CD4-positive, alpha-beta memory T cell (primary cell): ENCODE measurements at regions of chr1 and their contacts with region 1.

Region 1: DNA sequence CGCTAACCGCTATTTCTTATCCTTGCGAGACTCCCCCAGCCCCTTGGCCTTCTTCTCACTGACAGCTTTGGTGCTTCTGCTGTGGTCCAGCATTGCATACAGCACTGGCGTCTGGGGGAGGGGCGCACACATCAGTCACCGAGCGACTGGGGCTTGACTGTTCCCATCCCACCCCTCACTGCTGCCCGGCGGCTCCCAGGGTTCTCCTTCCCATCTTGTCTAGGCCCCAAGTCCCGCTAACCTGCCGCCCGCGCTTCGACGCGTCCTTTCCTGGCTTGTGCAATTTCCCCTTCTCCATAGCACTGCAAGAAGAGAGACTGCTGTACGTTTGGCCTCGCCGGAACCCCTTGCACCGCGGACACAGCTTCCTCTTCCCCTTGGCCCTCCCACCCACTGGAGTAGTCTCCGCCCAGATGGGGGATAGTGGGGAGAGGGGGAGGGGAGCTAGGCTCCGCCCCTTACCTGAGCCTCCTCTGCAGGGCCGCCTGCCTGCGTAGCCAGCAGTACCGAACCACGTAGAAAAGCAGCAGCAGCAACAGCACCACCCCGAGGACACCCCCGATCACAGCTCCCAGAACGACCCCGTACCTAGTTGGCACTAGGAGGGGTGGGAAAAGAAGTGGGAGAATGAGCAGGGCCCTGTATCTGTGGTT is 3.8 kb downstream of the MPZ start:
- DNase-seq: peak; percentile 89 to 92 (median 90)
- H3K4me3 ChIP-seq: peak overlapping the region; percentile 48 to 86
- H3K4me3 Mint-ChIP-seq: peak overlapping the region; percentile 89 to 100 (median 97)
- H3K27ac ChIP-seq: peak overlapping the region; percentile 77
- H3K27ac Mint-ChIP-seq: peak overlapping the region; percentile 91 to 99 (median 96)
- H3K4me1 ChIP-seq: peaks cover 29% of the 10 kb centered on the region
- H3K4me1 Mint-ChIP-seq: peaks cover 17 to 41% (median 29%) of the 10 kb centered on the region in 4 donors
- H3K27me3 ChIP-seq: no peaks in the 10 kb centered on the region
- H3K27me3 Mint-ChIP-seq: no peaks in the 10 kb centered on the region

Region 2: GRCh38 chr1:161185282-161185682 is 120.7 kb before region 1 on chr1:
- CTCF ChIA-PET with region 1: interaction called, 11 read pairs
- POLR2A ChIA-PET with region 1: interaction called, 8 read pairs
- intact Hi-C with region 1: no loop called
- DNase-seq: peak; percentile 86 to 92 (median 88)
- H3K4me3 ChIP-seq: peak overlapping the region; percentile 8 to 25
- H3K4me3 Mint-ChIP-seq: peak overlapping the region; percentile 73 to 89 (median 83)
- H3K27ac ChIP-seq: peak overlapping the region; percentile 47
- H3K27ac Mint-ChIP-seq: peak overlapping the region; percentile 86 to 96 (median 92)
- H3K4me1 ChIP-seq: peaks cover 94% of the 10 kb centered on the region
- H3K4me1 Mint-ChIP-seq: peaks cover 57 to 88% (median 78%) of the 10 kb centered on the region in 4 donors
- H3K27me3 ChIP-seq: no peaks in the 10 kb centered on the region
- H3K27me3 Mint-ChIP-seq: no peaks in the 10 kb centered on the region

Region 3: DNA sequence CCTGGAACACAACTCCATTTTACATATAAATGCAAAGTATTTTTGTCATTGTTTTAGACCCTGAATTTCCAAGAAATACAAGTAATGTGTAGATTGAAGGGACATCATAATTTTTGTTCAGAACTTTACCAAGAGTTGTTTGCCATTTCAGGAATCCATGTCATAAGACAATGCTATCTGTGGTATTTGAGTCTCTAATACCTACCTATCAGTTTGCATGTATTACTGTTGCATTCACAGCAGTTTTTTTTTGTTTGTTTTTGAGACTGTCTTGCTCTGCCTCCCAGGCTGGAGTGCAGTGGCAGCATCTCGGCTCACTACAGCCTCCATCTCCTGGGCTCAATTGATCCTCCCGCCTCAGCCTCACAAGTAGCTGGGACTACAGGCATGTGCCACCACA is 13.4 kb before region 1 on chr1:
- CTCF ChIA-PET with region 1: interaction called, 25 read pairs
- POLR2A ChIA-PET with region 1: interaction called, 4 read pairs
- intact Hi-C with region 1: no loop called
- DNase-seq: no peak
- H3K4me3 ChIP-seq: no peak overlapping the region
- H3K4me3 Mint-ChIP-seq: no peak overlapping the region
- H3K27ac ChIP-seq: no peak overlapping the region
- H3K27ac Mint-ChIP-seq: no peak overlapping the region
- H3K4me1 ChIP-seq: no peaks in the 10 kb centered on the region
- H3K4me1 Mint-ChIP-seq: peaks cover 0 to 5% (median under 1%) of the 10 kb centered on the region in 4 donors
- H3K27me3 ChIP-seq: no peaks in the 10 kb centered on the region
- H3K27me3 Mint-ChIP-seq: no peaks in the 10 kb centered on the region

Region 4: GRCh38 chr1:161382214-161383019 is 76.4 kb after region 1 on chr1:
- CTCF ChIA-PET with region 1: interaction called, 16 read pairs
- POLR2A ChIA-PET with region 1: no interaction called
- intact Hi-C with region 1: no loop called
- DNase-seq: peak in 4 of 5 donors; percentile 48 to 61 (median 56)
- H3K4me3 ChIP-seq: no peak overlapping the region
- H3K4me3 Mint-ChIP-seq: no peak overlapping the region
- H3K27ac ChIP-seq: no peak overlapping the region
- H3K27ac Mint-ChIP-seq: peak overlapping the region in 3 of 7 donors; percentile 3 to 76 (median 7)
- H3K4me1 ChIP-seq: peaks cover 17% of the 10 kb centered on the region
- H3K4me1 Mint-ChIP-seq: peaks cover 7 to 14% (median 13%) of the 10 kb centered on the region in 4 donors
- H3K27me3 ChIP-seq: no peaks in the 10 kb centered on the region
- H3K27me3 Mint-ChIP-seq: no peaks in the 10 kb centered on the region

Region 5: GRCh38 chr1:161389691-161390558 is 83.9 kb after region 1 on chr1:
- CTCF ChIA-PET with region 1: no interaction called
- POLR2A ChIA-PET with region 1: interaction called, 6 read pairs
- intact Hi-C with region 1: loop called (anchors 2 kb)
- DNase-seq: peak; percentile 91 to 96 (median 92)
- H3K4me3 ChIP-seq: peak overlapping the region; percentile 79 to 86
- H3K4me3 Mint-ChIP-seq: peak overlapping the region; percentile 84 to 95 (median 94)
- H3K27ac ChIP-seq: peak overlapping the region; percentile 87
- H3K27ac Mint-ChIP-seq: peak overlapping the region; percentile 94 to 99 (median 97)
- H3K4me1 ChIP-seq: peaks cover 29% of the 10 kb centered on the region
- H3K4me1 Mint-ChIP-seq: peaks cover 12 to 48% (median 33%) of the 10 kb centered on the region in 4 donors
- H3K27me3 ChIP-seq: no peaks in the 10 kb centered on the region
- H3K27me3 Mint-ChIP-seq: no peaks in the 10 kb centered on the region